PC-3 (cell line): ENCODE measurements at regions of chr1 and their contacts with region 1.

Region 1: GRCh38 chr1:18100491-18101063 is 7.0 kb upstream of the IGSF21 start:
- DNase-seq: peak; percentile 75
- ATAC-seq: peak; percentile 50
- H3K4me3 ChIP-seq: no peak overlapping the region
- H3K27ac ChIP-seq: no peak overlapping the region
- H3K4me1 ChIP-seq: no peaks in the 10 kb centered on the region
- H3K27me3 ChIP-seq: no peaks in the 10 kb centered on the region
- CTCF ChIP-seq: peak; percentile 83

Region 2: DNA sequence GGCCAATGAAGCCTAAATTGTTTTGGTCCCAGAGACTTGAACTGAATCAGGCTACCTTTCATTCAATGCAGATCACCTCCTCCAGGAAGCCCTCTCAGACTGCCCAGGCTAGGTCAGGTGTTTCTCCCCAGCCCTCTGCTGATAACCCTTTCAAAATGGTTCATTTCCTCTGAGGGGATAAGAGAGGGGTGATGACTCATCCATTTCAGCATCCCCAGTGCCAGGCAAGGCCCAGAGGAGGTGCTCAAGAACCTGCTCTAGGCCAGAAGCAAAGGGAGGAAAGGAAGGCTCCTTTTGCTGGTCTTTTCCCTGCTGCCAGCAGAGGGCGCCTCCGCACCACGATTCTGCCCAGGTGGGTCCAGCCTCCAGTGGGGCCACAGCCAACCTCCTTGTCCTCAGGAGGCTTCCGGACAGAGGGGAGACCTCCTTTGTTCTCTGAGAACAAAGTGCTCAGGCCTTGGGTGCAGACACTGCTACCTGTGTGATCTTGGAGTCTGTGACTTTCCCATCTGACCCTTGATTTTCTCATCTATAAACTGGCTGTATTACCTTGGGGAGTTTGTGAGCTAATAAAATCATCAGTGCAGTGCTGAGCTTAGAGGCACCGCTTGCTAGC is 606.4 kb before region 1 on chr1:
- CTCF ChIA-PET with region 1: no interaction called
- POLR2A ChIA-PET with region 1: no interaction called
- intact Hi-C with region 1: loop called (anchors 5 kb)
- DNase-seq: peak; percentile 85
- ATAC-seq: peak; percentile 98
- H3K4me3 ChIP-seq: no peak overlapping the region
- H3K27ac ChIP-seq: no peak overlapping the region
- H3K4me1 ChIP-seq: peaks cover 5% of the 10 kb centered on the region
- H3K27me3 ChIP-seq: no peaks in the 10 kb centered on the region
- CTCF ChIP-seq: peak; percentile 97

Region 3: GRCh38 chr1:17653728-17654351 is 446.7 kb before region 1 on chr1:
- CTCF ChIA-PET with region 1: no interaction called
- POLR2A ChIA-PET with region 1: no interaction called
- intact Hi-C with region 1: loop called (anchors 5 kb)
- DNase-seq: peak; percentile 58
- ATAC-seq: peak; percentile 93
- H3K4me3 ChIP-seq: no peak overlapping the region
- H3K27ac ChIP-seq: no peak overlapping the region
- H3K4me1 ChIP-seq: no peaks in the 10 kb centered on the region
- H3K27me3 ChIP-seq: no peaks in the 10 kb centered on the region
- CTCF ChIP-seq: peak; percentile 90

Region 4: GRCh38 chr1:18288722-18289121 is 188.1 kb after region 1 on chr1:
- CTCF ChIA-PET with region 1: no interaction called
- POLR2A ChIA-PET with region 1: no interaction called
- intact Hi-C with region 1: no loop called
- DNase-seq: no peak
- ATAC-seq: no peak
- H3K4me3 ChIP-seq: no peak overlapping the region
- H3K27ac ChIP-seq: no peak overlapping the region
- H3K4me1 ChIP-seq: no peaks in the 10 kb centered on the region
- H3K27me3 ChIP-seq: peaks cover 79% of the 10 kb centered on the region
- CTCF ChIP-seq: no peak